Natural killer cell (primary cell): ENCODE measurements at regions of chr1 and their contacts with region 1.

Region 1: GRCh38 chr1:156797212-156797871 is 19.3 kb downstream of the SH2D2A start:
- DNase-seq: peak; percentile 39 to 86
- ATAC-seq: peak; percentile 73 to 89 (median 75)
- H3K4me3 ChIP-seq: no peak overlapping the region
- H3K4me3 Mint-ChIP-seq: no peak overlapping the region
- H3K27ac ChIP-seq: no peak overlapping the region
- H3K27ac Mint-ChIP-seq: no peak overlapping the region
- H3K4me1 ChIP-seq: peaks cover 11% of the 10 kb centered on the region
- H3K4me1 Mint-ChIP-seq: peaks cover 14 to 16% of the 10 kb centered on the region in 2 donors
- H3K27me3 ChIP-seq: no peaks in the 10 kb centered on the region
- H3K27me3 Mint-ChIP-seq: no peaks in the 10 kb centered on the region
- CTCF ChIP-seq: peak; percentile 85

Region 2: GRCh38 chr1:156889802-156890585 is 92.7 kb after region 1 on chr1:
- intact Hi-C with region 1: loop called (anchors 1 kb)
- DNase-seq: peak; percentile 44 to 73
- ATAC-seq: peak; percentile 38 to 53 (median 45)
- H3K4me3 ChIP-seq: no peak overlapping the region
- H3K4me3 Mint-ChIP-seq: peak overlapping the region; percentile 29
- H3K27ac ChIP-seq: no peak overlapping the region
- H3K27ac Mint-ChIP-seq: no peak overlapping the region
- H3K4me1 ChIP-seq: peaks cover 20% of the 10 kb centered on the region
- H3K4me1 Mint-ChIP-seq: peaks cover 8 to 21% of the 10 kb centered on the region in 2 donors
- H3K27me3 ChIP-seq: peaks cover 29% of the 10 kb centered on the region
- H3K27me3 Mint-ChIP-seq: peaks cover 30 to 46% of the 10 kb centered on the region in 2 donors
- CTCF ChIP-seq: peak; percentile 78